Naive thymus-derived CD4-positive, alpha-beta T cell (primary cell): ENCODE measurements at regions of chr1 and their contacts with region 1.

Region 1: GRCh38 chr1:93155335-93155734 is 24.9 kb downstream of the TMED5 start:
- DNase-seq: no peak
- ATAC-seq: peak; percentile 31
- H3K4me3 ChIP-seq: no peak overlapping the region
- H3K4me3 Mint-ChIP-seq: peak overlapping the region in 1 of 10 donors; percentile 7
- H3K27ac ChIP-seq: no peak overlapping the region
- H3K27ac Mint-ChIP-seq: peak overlapping the region in 6 of 9 donors; percentile 7 to 85 (median 77)
- H3K4me1 ChIP-seq: no peaks in the 10 kb centered on the region
- H3K4me1 Mint-ChIP-seq: peaks cover 0 to 26% (median 9%) of the 10 kb centered on the region in 7 donors
- H3K27me3 ChIP-seq: no peaks in the 10 kb centered on the region
- H3K27me3 Mint-ChIP-seq: no peaks in the 10 kb centered on the region

Region 2: GRCh38 chr1:93171549-93172034 is 16.3 kb after region 1 on chr1:
- CTCF ChIA-PET with region 1: no interaction called
- POLR2A ChIA-PET with region 1: no interaction called
- intact Hi-C with region 1: loop called in 1 of 2 experiments (anchors 2 kb)
- DNase-seq: no peak
- ATAC-seq: no peak
- H3K4me3 ChIP-seq: peak overlapping the region; percentile 0
- H3K4me3 Mint-ChIP-seq: peak overlapping the region; percentile 59 to 95 (median 86)
- H3K27ac ChIP-seq: no peak overlapping the region
- H3K27ac Mint-ChIP-seq: peak overlapping the region in 8 of 9 donors; percentile 0 to 85 (median 54)
- H3K4me1 ChIP-seq: peaks cover 17 to 39% of the 10 kb centered on the region in 2 donors
- H3K4me1 Mint-ChIP-seq: peaks cover 54 to 80% (median 68%) of the 10 kb centered on the region in 7 donors
- H3K27me3 ChIP-seq: no peaks in the 10 kb centered on the region
- H3K27me3 Mint-ChIP-seq: no peaks in the 10 kb centered on the region